ENCODE measurements at regions of chr20 and their contacts with region 1.

Region 1: GRCh38 chr20:49610701-49611538 is 43.0 kb upstream of the PTGIS start:
- DNase-seq: no peak
- ATAC-seq: peak; percentile 87
- H3K4me3 ChIP-seq: peak overlapping the region; percentile 46; the same call in 1 of the 2 replicates
- H3K27ac ChIP-seq: no peak overlapping the region
- H3K4me1 ChIP-seq: peaks cover 11% of the 10 kb centered on the region
- H3K27me3 ChIP-seq: no peaks in the 10 kb centered on the region
- CTCF ChIP-seq: peak; percentile 97 to 99 (median 99)
- EP300 ChIP-seq: no peak
- POLR2A ChIP-seq: no peak
- RAD21 ChIP-seq: peak; percentile 94

Region 2: DNA sequence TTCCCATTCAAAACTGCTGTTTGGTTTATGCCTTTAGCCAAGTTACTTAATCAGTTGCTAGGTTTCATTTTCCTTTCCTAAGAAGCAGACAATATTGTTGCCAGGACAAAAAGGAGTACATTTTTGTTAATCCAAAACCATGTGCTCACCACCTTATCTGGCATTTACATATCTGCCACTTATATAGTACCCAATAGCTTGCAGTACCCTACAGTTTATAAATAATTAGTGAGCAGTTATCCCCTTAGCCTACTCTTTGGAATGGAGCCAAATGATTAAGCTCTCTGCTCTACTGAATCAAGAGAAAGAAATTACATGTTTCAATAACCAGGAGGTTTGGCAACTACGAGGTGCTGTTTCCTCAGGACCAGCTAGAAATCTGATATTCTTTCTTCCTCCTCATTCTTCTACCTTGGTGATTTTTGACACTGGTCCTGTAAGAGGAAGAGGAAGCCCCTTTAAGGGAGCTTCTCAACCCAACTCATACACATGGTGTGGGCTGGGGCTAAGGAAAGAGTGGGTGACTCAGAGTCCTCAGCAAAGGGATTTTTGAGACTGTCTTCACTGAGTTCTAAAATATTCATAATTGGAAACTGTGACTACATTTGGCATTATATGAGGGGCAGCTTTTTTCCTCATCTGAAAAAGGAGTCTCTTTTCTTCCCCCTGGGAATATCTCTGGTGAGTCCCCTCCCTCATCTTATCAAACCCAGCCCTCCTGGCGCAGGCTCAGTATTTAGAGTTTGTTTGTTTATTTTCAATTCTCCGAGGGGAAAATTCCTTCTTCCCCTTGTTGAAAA is 334.6 kb before region 1 on chr20:
- CTCF ChIA-PET with region 1: no interaction called
- POLR2A ChIA-PET with region 1: no interaction called
- RAD21 ChIA-PET with region 1: no interaction called
- SMC1A ChIA-PET with region 1: no interaction called
- in situ Hi-C with region 1: no loop called
- intact Hi-C with region 1: no loop called
- DNase-seq: no peak
- ATAC-seq: peak; percentile 21
- H3K4me3 ChIP-seq: peak overlapping the region; percentile 73
- H3K27ac ChIP-seq: peak overlapping the region; percentile 92
- H3K4me1 ChIP-seq: peaks cover 16% of the 10 kb centered on the region
- H3K27me3 ChIP-seq: no peaks in the 10 kb centered on the region
- CTCF ChIP-seq: no peak
- EP300 ChIP-seq: no peak; a peak in 1 of 4 replicates
- POLR2A ChIP-seq: no peak
- RAD21 ChIP-seq: no peak

Region 3: GRCh38 chr20:49338061-49338460 is 272.9 kb before region 1 on chr20:
- CTCF ChIA-PET with region 1: interaction called, 4 read pairs
- POLR2A ChIA-PET with region 1: no interaction called
- RAD21 ChIA-PET with region 1: no interaction called
- SMC1A ChIA-PET with region 1: interaction called, 4 read pairs
- in situ Hi-C with region 1: loop called (anchors 5 kb)
- intact Hi-C with region 1: loop called (anchors 1 kb)
- DNase-seq: no peak
- ATAC-seq: no peak
- H3K4me3 ChIP-seq: no peak overlapping the region
- H3K27ac ChIP-seq: no peak overlapping the region
- H3K4me1 ChIP-seq: no peaks in the 10 kb centered on the region
- H3K27me3 ChIP-seq: no peaks in the 10 kb centered on the region
- CTCF ChIP-seq: no peak
- EP300 ChIP-seq: no peak
- POLR2A ChIP-seq: no peak
- RAD21 ChIP-seq: no peak

Region 4: GRCh38 chr20:49433333-49433732 is 177.6 kb before region 1 on chr20:
- CTCF ChIA-PET with region 1: no interaction called
- POLR2A ChIA-PET with region 1: no interaction called
- RAD21 ChIA-PET with region 1: no interaction called
- SMC1A ChIA-PET with region 1: no interaction called
- in situ Hi-C with region 1: no loop called
- intact Hi-C with region 1: no loop called
- DNase-seq: no peak
- ATAC-seq: no peak
- H3K4me3 ChIP-seq: no peak overlapping the region
- H3K27ac ChIP-seq: no peak overlapping the region
- H3K4me1 ChIP-seq: no peaks in the 10 kb centered on the region
- H3K27me3 ChIP-seq: peaks cover 0 to 4% of the 10 kb centered on the region in 2 experiments; a peak in 2 of 4 replicates
- CTCF ChIP-seq: no peak
- EP300 ChIP-seq: no peak
- POLR2A ChIP-seq: no peak
- RAD21 ChIP-seq: no peak

Region 5: GRCh38 chr20:49595811-49596561 is 14.9 kb before region 1 on chr20:
- CTCF ChIA-PET with region 1: interaction called, 11 read pairs
- POLR2A ChIA-PET with region 1: no interaction called
- RAD21 ChIA-PET with region 1: interaction called, 3 read pairs
- SMC1A ChIA-PET with region 1: interaction called, 5 read pairs
- in situ Hi-C with region 1: no loop called
- intact Hi-C with region 1: no loop called
- DNase-seq: no peak
- ATAC-seq: peak; percentile 64
- H3K4me3 ChIP-seq: no peak overlapping the region
- H3K27ac ChIP-seq: no peak overlapping the region
- H3K4me1 ChIP-seq: peaks cover 21% of the 10 kb centered on the region
- H3K27me3 ChIP-seq: no peaks in the 10 kb centered on the region; a peak in 1 of 4 replicates
- CTCF ChIP-seq: no peak
- EP300 ChIP-seq: no peak
- POLR2A ChIP-seq: no peak
- RAD21 ChIP-seq: no peak

Region 6: DNA sequence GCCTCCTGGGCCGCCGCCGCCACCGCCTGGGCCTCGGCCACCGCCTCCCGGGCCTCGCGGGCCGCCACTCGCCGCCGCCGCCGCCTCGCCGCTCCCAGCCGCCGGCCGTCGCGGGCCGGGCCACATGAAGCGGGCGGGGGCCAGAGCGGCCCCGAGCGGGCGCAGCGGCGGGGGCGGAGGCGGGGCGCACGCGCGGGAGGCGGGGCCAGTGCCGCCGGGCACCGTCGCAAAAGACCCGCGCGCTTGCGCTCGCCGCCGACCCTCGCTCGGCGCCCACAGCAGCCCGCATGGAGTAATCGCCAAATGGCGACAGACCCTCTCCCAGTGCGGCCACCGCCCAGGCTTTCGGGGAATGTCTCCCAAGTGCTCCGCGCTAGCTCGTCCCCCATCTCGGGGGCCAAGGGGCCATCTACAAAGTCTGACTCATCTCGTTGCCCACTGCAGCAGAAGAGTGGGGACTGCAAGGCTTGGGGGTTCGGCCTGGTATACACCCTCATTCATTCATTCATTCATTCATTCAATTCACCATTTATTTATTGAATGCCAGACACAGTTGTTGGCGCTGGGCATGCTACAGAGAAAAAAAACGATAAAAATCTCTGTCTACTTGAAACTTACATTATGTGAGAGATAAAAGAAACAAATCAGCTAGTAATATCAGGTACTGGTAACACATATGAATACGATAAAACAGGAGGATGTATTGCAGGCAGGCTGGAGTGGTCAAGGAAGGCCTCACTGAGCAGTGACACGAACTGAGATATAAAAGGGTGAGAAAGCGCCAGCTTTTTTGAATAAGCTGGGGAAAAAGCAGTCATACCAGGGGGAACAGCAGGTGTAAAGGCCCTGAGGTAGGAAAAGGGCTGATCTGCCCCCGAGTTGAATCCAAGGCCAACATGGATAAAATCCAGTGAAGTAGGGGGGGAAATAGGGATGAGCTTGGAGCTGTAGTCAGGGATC is 103.1 kb after region 1 on chr20 and contains the start of gene B4GALT5:
- CTCF ChIA-PET with region 1: interaction called, 6 read pairs
- POLR2A ChIA-PET with region 1: no interaction called
- RAD21 ChIA-PET with region 1: no interaction called
- SMC1A ChIA-PET with region 1: interaction called, 11 read pairs
- in situ Hi-C with region 1: no loop called
- intact Hi-C with region 1: no loop called
- DNase-seq: no peak
- ATAC-seq: peak; percentile 76
- H3K4me3 ChIP-seq: peak within 1 kb of the TSS; percentile 97
- H3K27ac ChIP-seq: peak within 1 kb of the TSS; percentile 80
- H3K4me1 ChIP-seq: peaks cover 5% of the 10 kb centered on the region; the same call in 1 of the 2 replicates
- H3K27me3 ChIP-seq: no peaks in the 10 kb centered on the region
- CTCF ChIP-seq: no peak
- EP300 ChIP-seq: no peak
- POLR2A ChIP-seq: no peak
- RAD21 ChIP-seq: no peak
- polyA plus RNA-seq, gene B4GALT5: 10.0 to 15.3 TPM

Region 7: DNA sequence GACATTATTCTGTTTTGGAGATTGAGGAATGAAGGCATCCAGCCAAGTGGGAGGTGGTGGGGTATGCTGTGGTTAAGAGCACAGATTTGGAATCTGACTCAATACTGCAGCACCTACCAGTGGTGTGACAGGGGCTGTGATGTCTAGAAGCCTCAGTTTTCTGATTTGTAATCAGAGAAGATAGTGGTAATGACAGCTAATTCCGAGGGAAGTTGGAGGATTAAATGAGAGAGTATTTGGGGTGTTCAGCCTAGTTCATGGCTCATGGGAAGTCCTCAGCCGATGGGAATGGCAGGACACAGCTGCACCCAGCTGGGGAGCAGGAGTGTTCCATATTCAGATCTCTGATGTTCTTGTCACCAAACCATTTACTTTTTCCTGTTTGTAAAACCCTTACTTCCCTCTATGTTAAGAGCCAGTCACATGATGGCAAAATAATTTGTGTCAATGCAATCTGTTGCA is 211.0 kb after region 1 on chr20:
- CTCF ChIA-PET with region 1: interaction called, 84 read pairs
- POLR2A ChIA-PET with region 1: no interaction called
- RAD21 ChIA-PET with region 1: interaction called, 7 read pairs
- SMC1A ChIA-PET with region 1: interaction called, 15 read pairs
- in situ Hi-C with region 1: no loop called
- intact Hi-C with region 1: loop called (anchors 5 kb)
- DNase-seq: no peak
- ATAC-seq: peak; percentile 68
- H3K4me3 ChIP-seq: no peak overlapping the region
- H3K27ac ChIP-seq: 0 out of 2 replicates have a peak overlapping the region, but pooled peaks have one; percentile 14
- H3K4me1 ChIP-seq: peaks cover 22% of the 10 kb centered on the region
- H3K27me3 ChIP-seq: no peaks in the 10 kb centered on the region
- CTCF ChIP-seq: peak; percentile 34 to 55 (median 39); a peak in 5 of 6 replicates
- EP300 ChIP-seq: 0 out of 4 replicates have a peak, but pooled peaks of 1 of the 2 experiments have one; percentile 18
- POLR2A ChIP-seq: no peak
- RAD21 ChIP-seq: peak; percentile 61

Region 8: GRCh38 chr20:49915378-49916145 is 304.6 kb after region 1 on chr20 and contains the start of gene SPATA2:
- CTCF ChIA-PET with region 1: interaction called, 11 read pairs
- POLR2A ChIA-PET with region 1: no interaction called
- RAD21 ChIA-PET with region 1: interaction called, 3 read pairs
- SMC1A ChIA-PET with region 1: interaction called, 5 read pairs
- in situ Hi-C with region 1: no loop called
- intact Hi-C with region 1: no loop called
- DNase-seq: peak; percentile 79
- ATAC-seq: peak; percentile 92
- H3K4me3 ChIP-seq: peak within 1 kb of the TSS; percentile 94
- H3K27ac ChIP-seq: peak within 1 kb of the TSS; percentile 100
- H3K4me1 ChIP-seq: peaks cover 8% of the 10 kb centered on the region
- H3K27me3 ChIP-seq: no peaks in the 10 kb centered on the region
- CTCF ChIP-seq: no peak
- EP300 ChIP-seq: no peak
- POLR2A ChIP-seq: peak; percentile 83
- RAD21 ChIP-seq: no peak
- polyA plus RNA-seq, gene SPATA2: 0.93 to 1.3 TPM